MCF 10A (cell line): ENCODE measurements at regions of chr6 and their contacts with region 1.

Region 1: GRCh38 chr6:44338228-44339122 is 4.0 kb upstream of the SPATS1 start:
- DNase-seq: peak; percentile 77
- H3K4me3 Mint-ChIP-seq: no peak overlapping the region
- H3K27ac Mint-ChIP-seq: no peak overlapping the region
- H3K4me1 Mint-ChIP-seq: no peaks in the 10 kb centered on the region
- H3K27me3 Mint-ChIP-seq: peaks cover 40% of the 10 kb centered on the region
- CTCF ChIP-seq: peak; percentile 60

Region 2: DNA sequence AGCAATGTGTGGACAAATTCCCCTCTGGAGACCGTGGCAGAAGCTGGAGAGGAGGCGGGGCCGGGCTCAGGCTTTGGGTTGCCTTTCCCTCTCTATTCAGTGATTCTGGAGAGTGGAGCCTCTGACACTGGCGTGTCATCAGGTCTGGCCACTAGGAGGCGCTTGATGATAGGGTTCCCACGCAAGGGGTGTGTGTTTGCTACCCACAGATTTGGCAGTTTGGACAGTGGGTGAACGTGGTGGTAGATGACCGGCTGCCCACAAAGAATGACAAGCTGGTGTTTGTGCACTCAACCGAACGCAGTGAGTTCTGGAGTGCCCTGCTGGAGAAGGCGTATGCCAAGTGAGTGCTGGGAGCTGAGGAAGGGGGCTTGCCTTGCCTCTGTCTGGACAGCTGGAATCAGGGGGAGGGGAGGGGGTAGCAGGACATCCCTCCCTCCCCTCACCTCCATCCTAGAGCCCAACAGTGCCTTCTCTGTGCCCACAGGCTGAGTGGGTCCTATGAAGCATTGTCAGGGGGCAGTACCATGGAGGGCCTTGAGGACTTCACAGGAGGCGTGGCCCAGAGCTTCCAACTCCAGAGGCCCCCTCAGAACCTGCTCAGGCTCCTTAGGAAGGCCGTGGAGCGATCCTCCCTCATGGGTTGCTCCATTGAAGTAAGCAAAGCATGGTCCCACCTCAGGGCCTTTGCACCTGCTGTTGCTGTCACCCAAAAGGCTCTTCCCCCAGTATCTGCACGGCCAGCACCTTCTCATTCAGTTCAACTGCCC is 165.6 kb before region 1 on chr6:
- CTCF ChIA-PET with region 1: interaction called, 27 read pairs
- POLR2A ChIA-PET with region 1: interaction called, 3 read pairs
- intact Hi-C with region 1: loop called (anchors 2 kb)
- DNase-seq: peak; percentile 84
- H3K4me3 Mint-ChIP-seq: no peak overlapping the region
- H3K27ac Mint-ChIP-seq: no peak overlapping the region
- H3K4me1 Mint-ChIP-seq: peaks cover 16% of the 10 kb centered on the region
- H3K27me3 Mint-ChIP-seq: no peaks in the 10 kb centered on the region
- CTCF ChIP-seq: peak; percentile 85

Region 3: GRCh38 chr6:44265007-44265721 is 73.3 kb before region 1 on chr6 and contains the start of gene NFKBIE:
- CTCF ChIA-PET with region 1: interaction called, 214 read pairs
- POLR2A ChIA-PET with region 1: interaction called, 17 read pairs
- intact Hi-C with region 1: loop called (anchors 1 kb)
- DNase-seq: peak; percentile 92
- H3K4me3 Mint-ChIP-seq: peak within 1 kb of the TSS; percentile 91
- H3K27ac Mint-ChIP-seq: peak within 1 kb of the TSS; percentile 77
- H3K4me1 Mint-ChIP-seq: peaks cover 23% of the 10 kb centered on the region
- H3K27me3 Mint-ChIP-seq: peaks cover 9% of the 10 kb centered on the region
- CTCF ChIP-seq: no peak
- total RNA-seq, gene NFKBIE: 6.0 and 8.8 TPM in 2 replicates

Region 4: GRCh38 chr6:44304282-44305199 is 33.9 kb before region 1 on chr6:
- CTCF ChIA-PET with region 1: interaction called, 33 read pairs
- POLR2A ChIA-PET with region 1: no interaction called
- intact Hi-C with region 1: no loop called
- DNase-seq: peak; percentile 26
- H3K4me3 Mint-ChIP-seq: no peak overlapping the region
- H3K27ac Mint-ChIP-seq: no peak overlapping the region
- H3K4me1 Mint-ChIP-seq: peaks cover 9% of the 10 kb centered on the region
- H3K27me3 Mint-ChIP-seq: no peaks in the 10 kb centered on the region
- CTCF ChIP-seq: peak; percentile 53

Region 5: DNA sequence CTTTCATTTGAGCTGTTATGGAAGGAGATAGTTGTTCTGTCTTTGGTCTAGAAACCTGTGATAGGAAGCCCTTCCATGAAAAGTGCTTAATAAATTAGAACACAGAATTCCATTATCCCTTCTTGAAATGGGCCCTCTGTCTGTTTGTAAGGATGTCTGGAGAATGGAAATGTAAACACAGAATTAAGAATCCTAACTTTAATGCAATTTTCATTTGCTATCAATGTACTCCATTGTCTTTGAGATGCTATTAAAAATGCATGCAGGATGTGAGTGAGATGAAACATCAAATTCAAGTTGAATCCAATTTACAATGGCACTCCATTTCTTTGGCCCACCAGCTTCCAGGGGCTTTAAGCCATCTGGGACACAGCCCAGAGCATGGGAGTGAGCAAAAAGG is 11.4 kb before region 1 on chr6:
- CTCF ChIA-PET with region 1: interaction called, 13 read pairs
- POLR2A ChIA-PET with region 1: no interaction called
- intact Hi-C with region 1: no loop called
- DNase-seq: no peak
- H3K4me3 Mint-ChIP-seq: no peak overlapping the region
- H3K27ac Mint-ChIP-seq: no peak overlapping the region
- H3K4me1 Mint-ChIP-seq: no peaks in the 10 kb centered on the region
- H3K27me3 Mint-ChIP-seq: peaks cover 12% of the 10 kb centered on the region
- CTCF ChIP-seq: no peak

Region 6: DNA sequence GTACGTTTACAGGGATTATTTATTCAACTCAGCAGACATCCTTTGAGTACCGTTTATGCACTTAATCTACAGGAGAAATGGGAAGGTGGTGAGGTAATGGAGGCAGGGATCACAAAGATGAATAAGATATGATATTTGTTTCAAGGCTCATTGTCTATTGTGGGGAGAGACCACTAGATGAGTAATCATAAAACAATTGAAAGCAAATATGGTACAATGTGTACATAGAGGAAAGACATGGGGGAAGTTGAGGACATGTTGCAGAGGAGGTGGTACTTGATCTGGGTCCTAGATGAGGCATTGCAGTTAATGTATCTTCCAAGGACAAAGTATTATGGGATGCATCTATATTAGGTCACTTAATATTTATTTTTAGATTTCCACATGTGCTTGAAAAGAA is 35.3 kb after region 1 on chr6:
- CTCF ChIA-PET with region 1: no interaction called
- POLR2A ChIA-PET with region 1: no interaction called
- intact Hi-C with region 1: no loop called
- DNase-seq: no peak
- H3K4me3 Mint-ChIP-seq: no peak overlapping the region
- H3K27ac Mint-ChIP-seq: no peak overlapping the region
- H3K4me1 Mint-ChIP-seq: peaks cover 6% of the 10 kb centered on the region
- H3K27me3 Mint-ChIP-seq: peaks cover 14% of the 10 kb centered on the region
- CTCF ChIP-seq: no peak